KBM-7 (cell line): ENCODE measurements at regions of chr7 and their contacts with region 1.

Region 1: DNA sequence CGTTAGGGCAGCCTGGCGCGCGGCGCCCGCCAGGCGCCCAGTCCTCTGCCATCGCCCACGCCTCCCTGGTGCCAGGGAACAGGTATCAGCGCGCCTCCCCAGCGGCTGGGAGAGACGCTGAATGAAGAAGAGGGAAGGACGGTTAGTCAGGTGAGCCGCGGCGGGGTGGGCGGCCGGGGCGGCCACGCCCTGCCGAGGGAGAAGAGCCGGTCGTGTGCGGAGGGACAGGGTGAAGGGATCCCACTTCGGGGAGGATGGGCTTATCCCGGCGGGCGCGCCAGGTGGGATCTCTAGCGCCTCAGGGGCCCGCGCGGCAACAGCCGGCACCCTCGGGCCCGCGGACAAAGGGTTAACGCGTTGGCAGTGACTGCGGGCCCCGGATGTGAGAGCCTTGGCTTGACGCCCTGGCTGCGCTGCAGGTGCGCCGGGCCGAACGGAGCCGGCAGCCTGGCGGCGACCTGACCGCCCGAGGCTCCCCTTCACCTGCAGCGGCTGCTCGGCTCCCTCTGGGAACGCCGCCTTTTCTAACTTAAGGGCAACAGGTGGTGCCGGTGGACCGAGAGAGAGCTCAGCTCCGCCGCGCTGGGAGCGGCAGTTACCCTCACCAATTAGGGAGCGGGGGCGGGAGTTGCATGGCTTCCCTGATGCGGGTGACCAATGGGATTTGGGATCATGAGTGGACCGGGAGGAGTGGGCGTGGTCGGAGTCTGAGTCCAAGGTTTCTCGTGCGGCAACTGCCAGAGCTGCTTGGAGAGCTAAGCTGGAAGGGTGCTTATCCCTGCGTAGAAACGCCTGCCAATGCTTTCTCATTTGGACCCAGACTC is at the start of gene ARL4A:
- DNase-seq: peak; percentile 98

Region 2: DNA sequence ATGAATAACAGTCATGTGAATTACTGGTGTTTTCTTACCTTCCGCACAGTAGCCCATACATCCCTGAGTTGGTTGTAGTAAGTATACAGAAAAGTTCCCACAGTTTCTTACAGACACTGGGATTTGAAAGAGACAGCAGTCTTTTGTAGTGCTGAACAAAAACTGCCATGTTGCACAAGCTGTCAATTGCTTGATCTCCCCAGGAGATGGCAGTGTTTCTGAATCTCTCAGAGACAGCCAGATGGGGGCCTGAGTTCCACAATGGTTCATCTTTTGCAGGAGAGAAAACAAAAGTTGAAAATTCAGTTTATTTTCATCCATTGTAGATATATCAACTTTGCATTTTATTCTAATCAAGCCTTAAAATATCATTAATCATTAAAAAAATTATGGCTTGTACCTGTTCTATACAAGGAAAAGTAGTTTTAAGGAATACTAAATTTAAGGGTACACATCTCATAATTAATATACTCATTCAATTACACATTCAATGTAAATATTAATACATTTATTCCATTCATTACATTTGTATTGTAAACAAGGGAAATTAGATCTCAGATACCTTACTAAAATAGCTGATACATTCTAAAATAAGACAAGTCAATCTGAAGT is 297.9 kb before region 1 on chr7:
- in situ Hi-C with region 1: no loop called
- DNase-seq: peak; percentile 59

Region 3: GRCh38 chr7:13117103-13117502 is 430.0 kb after region 1 on chr7:
- in situ Hi-C with region 1: loop called (anchors 25 kb)
- DNase-seq: peak; percentile 19